ENCODE measurements at regions of chr1 and their contacts with region 1.

Region 1: DNA sequence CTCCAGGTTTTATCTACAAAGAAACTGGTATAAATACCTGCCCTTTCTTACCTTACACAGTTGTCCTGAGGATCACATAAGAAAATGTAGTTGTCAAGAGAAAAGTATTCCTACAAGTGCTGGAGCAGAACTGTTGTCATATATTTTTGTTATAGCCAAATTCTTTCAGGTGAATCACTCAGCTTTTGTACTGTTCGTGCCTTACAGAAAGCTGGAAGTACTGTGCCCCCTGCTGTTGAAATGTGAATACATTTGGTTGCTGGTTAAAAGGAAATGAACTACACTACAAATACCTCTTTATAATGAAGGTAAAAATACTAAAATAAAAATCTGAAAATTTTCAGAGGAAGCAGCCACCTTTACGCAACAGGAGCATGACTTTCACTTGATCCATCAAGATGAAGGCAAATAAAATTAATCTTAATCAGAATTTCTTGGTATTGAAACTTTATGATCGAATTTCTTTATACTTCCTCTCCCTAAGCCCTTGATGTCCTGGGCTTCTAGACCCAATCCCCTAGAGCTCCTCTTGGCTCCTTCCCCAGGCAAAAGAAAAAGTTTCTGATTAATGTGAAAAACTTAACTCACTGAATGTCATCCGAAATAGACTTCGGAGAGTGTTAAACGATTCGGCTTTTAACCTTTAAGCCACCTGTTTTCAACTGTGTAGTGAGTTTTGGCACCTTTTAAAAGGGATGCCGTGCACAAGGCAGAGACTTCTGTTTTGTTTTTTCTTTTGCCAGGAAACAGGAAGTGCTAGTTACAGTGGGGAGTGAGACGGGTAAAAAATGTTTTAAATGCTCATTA is 12.5 kb downstream of the CHML start:
- DNase-seq: no peak
- H3K27ac ChIP-seq: no peak overlapping the region
- CTCF ChIP-seq: peak; percentile 42

Region 2: GRCh38 chr1:241519308-241520079 is 108.2 kb before region 1 on chr1 and contains the start of gene FH:
- CTCF ChIA-PET with region 1: interaction called, 12 read pairs
- POLR2A ChIA-PET with region 1: no interaction called
- DNase-seq: peak; percentile 97
- H3K27ac ChIP-seq: peak within 1 kb of the TSS; percentile 88
- CTCF ChIP-seq: no peak

Region 3: DNA sequence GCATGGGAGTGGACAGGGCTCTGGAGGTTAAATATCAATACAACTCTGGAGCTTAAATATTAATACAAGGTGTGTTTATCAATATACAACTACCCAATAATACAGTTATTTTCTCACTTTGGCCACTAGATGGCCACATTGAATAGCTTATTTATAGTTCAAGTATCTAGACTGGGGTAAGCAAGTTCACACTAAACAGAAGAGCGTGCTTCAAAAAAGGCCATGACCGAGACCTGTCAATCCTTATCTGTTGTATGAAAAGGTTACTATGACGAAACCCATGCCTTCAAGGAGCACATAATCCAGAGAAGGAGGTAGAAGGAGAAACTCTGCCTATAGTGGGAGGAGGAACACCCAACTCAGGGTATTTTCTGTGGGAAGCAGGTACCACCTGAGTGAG is 16.6 kb before region 1 on chr1:
- CTCF ChIA-PET with region 1: interaction called, 11 read pairs
- POLR2A ChIA-PET with region 1: no interaction called
- DNase-seq: peak; percentile 49
- H3K27ac ChIP-seq: no peak overlapping the region
- CTCF ChIP-seq: peak; percentile 60

Measured in RWPE1 (cell line).